Activated CD4-positive, alpha-beta memory T cell treated with anti-CD3 and anti-CD28 coated beads, Interleukin-2, amount 10 ng/mL, durations not matched to agents 7 days and 5 days (primary cell): ENCODE measurements at regions of chr15 and their contacts with region 1.

Region 1: GRCh38 chr15:90716976-90717821 is at the start of gene BLM:
- DNase-seq: peak; percentile 97
- H3K4me3 Mint-ChIP-seq: peak within 1 kb of the TSS; percentile 83
- H3K27ac Mint-ChIP-seq: peak within 1 kb of the TSS; percentile 94
- H3K4me1 Mint-ChIP-seq: peaks cover 36% of the 10 kb centered on the region
- H3K27me3 Mint-ChIP-seq: no peaks in the 10 kb centered on the region
- total RNA-seq, gene BLM: 59.4 to 63.7 TPM

Region 2: GRCh38 chr15:90654233-90655124 is 62.7 kb before region 1 on chr15:
- CTCF ChIA-PET with region 1: interaction called, 4 read pairs
- POLR2A ChIA-PET with region 1: interaction called, 44 read pairs
- DNase-seq: no peak
- H3K4me3 Mint-ChIP-seq: no peak overlapping the region
- H3K27ac Mint-ChIP-seq: peak overlapping the region; percentile 37
- H3K4me1 Mint-ChIP-seq: peaks cover 72% of the 10 kb centered on the region
- H3K27me3 Mint-ChIP-seq: peaks cover 19% of the 10 kb centered on the region

Region 3: DNA sequence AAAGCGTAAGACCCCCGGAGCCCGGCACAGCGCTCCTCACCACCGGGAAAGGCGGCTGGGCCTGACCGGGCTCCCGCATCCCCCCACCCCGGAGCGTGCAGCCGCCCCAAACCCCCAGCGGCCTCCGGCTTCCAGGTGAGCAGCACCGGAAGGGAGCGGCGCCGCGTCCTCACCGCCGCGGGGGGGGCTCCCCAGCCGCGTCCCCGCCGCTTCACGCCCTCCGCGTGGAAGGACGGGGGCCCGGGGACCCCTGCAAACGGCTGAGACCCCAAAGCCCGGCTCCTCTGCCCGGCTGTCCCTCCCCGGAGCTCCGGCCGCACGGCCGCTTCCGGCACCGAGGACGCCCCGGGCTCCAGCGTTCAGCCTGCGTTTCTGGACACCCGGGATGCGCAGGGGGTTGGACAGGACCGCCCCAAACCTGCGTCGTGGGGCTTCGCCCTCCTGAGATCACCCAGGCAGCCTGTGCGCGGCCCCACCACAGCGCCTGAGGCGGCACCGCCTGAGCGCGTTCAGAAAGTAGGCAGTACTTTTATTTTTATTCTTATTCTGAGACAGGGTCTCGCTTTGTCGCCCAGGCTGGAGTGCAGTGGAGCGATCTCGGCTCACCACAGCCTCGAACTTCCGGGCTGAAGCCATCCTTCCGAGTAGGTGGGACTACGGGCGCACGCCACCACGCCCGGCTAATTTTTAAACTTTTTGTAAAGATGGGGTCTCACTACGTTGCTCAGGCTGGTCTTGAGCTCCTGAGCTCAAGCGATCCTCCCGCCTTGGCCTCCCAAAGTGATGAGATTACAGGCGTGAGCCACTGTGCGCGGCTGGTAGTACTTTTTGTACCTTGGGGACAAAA is 51.7 kb before region 1 on chr15:
- CTCF ChIA-PET with region 1: interaction called, 3 read pairs
- POLR2A ChIA-PET with region 1: interaction called, 18 read pairs
- DNase-seq: peak; percentile 81
- H3K4me3 Mint-ChIP-seq: peak overlapping the region; percentile 82
- H3K27ac Mint-ChIP-seq: peak overlapping the region; percentile 94
- H3K4me1 Mint-ChIP-seq: peaks cover 60% of the 10 kb centered on the region
- H3K27me3 Mint-ChIP-seq: peaks cover 21% of the 10 kb centered on the region

Region 4: GRCh38 chr15:90750186-90750585 is 33.0 kb after region 1 on chr15:
- CTCF ChIA-PET with region 1: interaction called, 6 read pairs
- POLR2A ChIA-PET with region 1: interaction called, 11 read pairs
- DNase-seq: peak; percentile 55
- H3K4me3 Mint-ChIP-seq: peak overlapping the region; percentile 61
- H3K27ac Mint-ChIP-seq: peak overlapping the region; percentile 82
- H3K4me1 Mint-ChIP-seq: peaks cover 53% of the 10 kb centered on the region
- H3K27me3 Mint-ChIP-seq: no peaks in the 10 kb centered on the region

Region 5: DNA sequence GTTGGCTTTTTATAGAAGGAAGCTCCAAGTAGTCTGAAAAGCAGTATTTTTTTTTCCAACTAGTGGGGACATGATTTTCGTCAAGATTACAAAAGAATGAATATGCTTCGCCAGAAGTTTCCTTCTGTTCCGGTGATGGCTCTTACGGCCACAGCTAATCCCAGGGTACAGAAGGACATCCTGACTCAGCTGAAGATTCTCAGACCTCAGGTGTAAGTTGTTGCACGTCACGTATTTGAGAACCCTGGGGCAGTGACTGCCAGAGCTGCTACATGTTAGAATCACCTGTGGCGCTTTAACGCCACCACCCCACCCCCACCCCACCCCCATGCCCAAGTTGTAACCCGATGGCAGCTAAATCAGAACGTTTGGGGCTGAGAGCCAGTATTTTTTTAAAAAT is 52.2 kb after region 1 on chr15:
- CTCF ChIA-PET with region 1: no interaction called
- POLR2A ChIA-PET with region 1: no interaction called
- DNase-seq: no peak
- H3K4me3 Mint-ChIP-seq: no peak overlapping the region
- H3K27ac Mint-ChIP-seq: no peak overlapping the region
- H3K4me1 Mint-ChIP-seq: peaks cover 15% of the 10 kb centered on the region
- H3K27me3 Mint-ChIP-seq: no peaks in the 10 kb centered on the region

Region 6: DNA sequence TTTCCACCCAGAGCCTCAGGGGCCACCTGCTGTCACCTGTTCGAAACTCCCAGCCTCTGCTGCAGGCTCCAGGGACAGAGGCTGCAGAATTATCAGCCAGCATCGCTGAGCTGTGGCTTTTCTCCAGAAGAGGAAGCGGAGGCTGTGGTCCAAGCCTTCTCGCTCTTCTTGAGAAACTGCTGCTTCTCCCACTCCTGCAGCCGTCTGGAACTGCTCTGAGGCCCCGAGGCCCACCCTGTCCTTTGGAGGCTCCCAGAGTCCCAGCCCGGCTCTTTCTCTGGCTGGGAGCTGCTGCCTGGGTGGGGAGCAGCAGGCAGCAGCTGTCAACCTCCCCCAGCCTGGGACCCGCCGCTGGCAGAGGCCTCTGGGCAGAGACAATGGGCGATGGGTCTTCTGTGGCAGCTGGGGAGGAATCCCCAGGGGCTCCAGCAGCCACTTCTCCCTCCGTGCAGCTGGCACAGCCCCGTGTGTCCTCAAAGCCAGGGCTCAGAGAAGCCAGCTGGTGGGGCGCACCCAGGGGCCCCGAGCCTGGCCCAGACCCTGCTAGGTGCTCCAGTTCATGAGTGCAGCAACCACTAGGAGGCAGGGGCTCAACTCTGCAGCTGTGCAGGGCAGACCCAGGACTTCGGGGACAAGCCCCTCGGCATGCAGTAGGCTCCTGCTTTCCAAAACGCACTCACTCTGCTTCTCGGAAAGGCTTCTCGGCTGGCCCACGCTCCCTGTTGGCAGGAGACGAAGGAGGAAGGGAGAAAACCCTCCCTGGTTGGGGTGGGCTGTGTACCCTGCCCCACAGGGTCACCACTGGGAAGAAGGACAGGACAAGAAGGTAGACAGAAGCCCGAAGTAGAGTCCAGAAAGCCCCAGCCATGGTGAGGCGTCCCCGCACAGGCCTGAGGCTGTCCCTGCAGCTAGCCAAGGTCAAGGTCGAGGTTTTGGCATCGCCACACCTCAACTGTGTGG is 101.3 kb after region 1 on chr15:
- CTCF ChIA-PET with region 1: interaction called, 6 read pairs
- POLR2A ChIA-PET with region 1: interaction called, 19 read pairs
- DNase-seq: peak; percentile 62
- H3K4me3 Mint-ChIP-seq: peak overlapping the region; percentile 18
- H3K27ac Mint-ChIP-seq: peak overlapping the region; percentile 93
- H3K4me1 Mint-ChIP-seq: peaks cover 80% of the 10 kb centered on the region
- H3K27me3 Mint-ChIP-seq: no peaks in the 10 kb centered on the region

Region 7: DNA sequence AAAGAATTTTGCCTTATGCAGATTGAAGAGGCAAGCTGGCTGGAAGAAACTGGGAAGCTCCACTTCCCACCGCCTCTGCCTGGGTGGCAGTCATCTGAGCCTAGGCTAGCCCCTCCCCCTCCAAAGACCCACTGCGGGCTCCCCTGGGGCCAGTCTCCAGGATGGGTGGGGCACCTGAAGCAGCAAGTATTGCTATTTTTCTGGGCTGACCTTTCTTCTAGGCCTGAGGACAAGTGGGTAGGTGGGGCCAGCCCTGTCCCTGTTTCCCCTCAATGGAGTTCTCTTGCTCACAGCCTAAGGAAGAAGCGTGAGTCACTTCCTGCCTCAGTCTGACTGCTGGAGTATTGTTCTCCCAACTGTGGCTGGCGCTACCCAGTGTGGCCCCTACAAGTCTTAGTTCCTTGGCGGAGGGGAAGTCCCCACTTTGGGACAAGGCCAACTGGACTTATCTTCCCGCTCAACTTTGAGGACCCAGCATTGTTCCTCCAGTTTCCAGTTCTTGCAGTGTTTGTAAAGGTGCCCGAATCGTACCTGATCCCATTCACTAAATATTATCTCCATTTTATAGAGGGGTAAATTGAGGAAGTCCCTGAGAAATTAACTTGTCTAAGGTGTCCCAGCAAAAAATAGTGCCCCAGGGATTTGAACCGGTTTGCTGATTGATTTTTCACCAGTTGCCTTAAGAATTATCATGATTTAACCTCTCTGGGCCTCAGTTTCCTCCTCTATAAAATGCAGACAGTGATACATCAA is 152.6 kb after region 1 on chr15:
- CTCF ChIA-PET with region 1: interaction called, 3 read pairs
- POLR2A ChIA-PET with region 1: interaction called, 22 read pairs
- DNase-seq: peak; percentile 63
- H3K4me3 Mint-ChIP-seq: peak overlapping the region; percentile 85
- H3K27ac Mint-ChIP-seq: peak overlapping the region; percentile 91
- H3K4me1 Mint-ChIP-seq: peaks cover 59% of the 10 kb centered on the region
- H3K27me3 Mint-ChIP-seq: no peaks in the 10 kb centered on the region

Region 8: DNA sequence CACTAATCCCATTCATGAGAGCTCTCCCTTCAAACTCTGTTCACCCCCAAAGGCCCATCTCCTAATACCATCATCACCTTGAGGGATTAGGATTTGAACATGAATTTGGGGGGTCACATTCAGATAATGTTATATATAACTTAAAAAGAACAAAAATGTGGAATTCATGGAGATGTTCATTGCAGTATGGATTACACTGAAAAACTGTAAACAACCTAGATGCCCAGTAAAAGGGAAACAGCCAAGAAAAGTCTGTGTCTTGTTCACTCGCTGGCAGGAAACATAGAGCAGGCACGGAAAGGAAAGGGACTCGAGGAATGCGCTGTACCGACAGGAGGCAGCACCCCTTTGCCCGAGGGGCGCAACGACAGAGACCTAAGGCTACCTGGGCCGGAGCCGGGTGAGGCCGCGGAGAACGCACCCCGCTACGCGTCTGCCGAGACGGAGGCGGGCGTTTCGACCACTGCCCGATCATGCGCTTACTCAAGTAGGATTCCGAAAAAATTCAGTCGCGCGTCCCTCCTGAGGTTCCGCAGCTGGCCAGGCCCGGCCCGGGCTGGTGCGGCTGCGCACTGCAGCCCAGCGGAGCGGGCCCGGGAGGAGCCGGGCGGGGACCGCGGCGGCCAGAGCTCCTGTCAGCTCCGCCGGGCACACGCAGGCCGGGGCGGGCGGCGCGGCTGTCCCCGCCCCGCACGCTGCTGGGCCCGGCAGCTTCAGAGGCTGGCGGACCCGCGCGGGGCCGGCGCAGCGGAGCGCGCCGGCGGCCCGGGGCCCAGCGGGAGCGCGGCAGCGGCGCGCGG is 185.0 kb after region 1 on chr15:
- CTCF ChIA-PET with region 1: interaction called, 3 read pairs
- POLR2A ChIA-PET with region 1: interaction called, 22 read pairs
- DNase-seq: peak; percentile 77
- H3K4me3 Mint-ChIP-seq: peak overlapping the region; percentile 80
- H3K27ac Mint-ChIP-seq: peak overlapping the region; percentile 81
- H3K4me1 Mint-ChIP-seq: peaks cover 40% of the 10 kb centered on the region
- H3K27me3 Mint-ChIP-seq: no peaks in the 10 kb centered on the region